ENCODE measurements at regions of chr6 and their contacts with region 1.

Region 1: DNA sequence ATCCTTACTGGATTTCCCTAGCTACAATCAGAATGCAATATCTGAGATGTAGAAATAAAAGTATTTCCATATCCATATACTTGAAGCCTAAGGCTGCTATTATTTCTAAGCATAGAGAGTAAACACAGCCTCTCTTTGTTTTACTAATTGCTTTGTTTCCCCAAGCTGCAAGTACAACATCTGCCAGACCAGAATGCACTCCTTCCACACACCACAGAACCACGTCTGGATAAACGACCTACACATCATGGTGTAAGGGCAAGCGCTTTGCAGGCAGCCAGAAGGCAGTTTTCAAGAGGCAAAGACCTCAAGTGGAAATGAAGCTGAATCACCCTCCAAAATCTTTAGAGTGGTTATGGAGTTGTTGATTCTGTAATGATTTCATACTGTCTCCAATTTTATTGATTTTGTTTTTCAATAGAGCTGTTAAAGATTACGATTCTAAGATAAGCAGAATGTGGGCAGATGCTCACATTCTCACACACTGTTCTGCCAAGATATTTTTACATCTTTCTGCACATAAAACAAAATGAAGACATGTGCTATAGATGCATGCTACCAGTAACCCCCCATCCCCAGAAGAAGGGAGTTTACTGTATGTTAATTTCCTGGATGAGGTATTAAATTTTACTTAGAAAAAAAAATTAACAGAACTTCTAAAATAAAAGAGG is 88.8 kb downstream of the THEMIS start:
- DNase-seq: no peak
- CTCF ChIP-seq: no peak

Region 2: DNA sequence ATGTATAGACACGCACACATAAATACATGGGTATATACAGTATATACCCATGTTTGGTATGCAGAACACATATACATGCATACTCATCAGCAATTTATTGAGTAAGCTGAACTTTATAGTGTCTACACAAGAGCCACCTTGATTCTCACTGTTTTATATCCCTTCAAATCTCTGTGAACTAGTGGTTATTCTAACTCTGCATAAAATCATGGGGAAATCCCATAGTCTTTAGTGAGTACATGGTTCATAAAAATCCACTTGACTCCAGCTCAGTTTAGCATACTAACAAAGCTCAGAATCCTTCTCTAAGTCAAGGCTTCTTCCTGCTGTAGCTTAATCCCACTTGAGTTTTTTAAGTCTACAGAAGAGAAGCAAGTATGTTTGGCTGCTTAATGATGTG is 15.3 kb before region 1 on chr6:
- CTCF ChIA-PET with region 1: interaction called, 12 read pairs
- POLR2A ChIA-PET with region 1: no interaction called
- DNase-seq: no peak
- CTCF ChIP-seq: no peak

Region 3: DNA sequence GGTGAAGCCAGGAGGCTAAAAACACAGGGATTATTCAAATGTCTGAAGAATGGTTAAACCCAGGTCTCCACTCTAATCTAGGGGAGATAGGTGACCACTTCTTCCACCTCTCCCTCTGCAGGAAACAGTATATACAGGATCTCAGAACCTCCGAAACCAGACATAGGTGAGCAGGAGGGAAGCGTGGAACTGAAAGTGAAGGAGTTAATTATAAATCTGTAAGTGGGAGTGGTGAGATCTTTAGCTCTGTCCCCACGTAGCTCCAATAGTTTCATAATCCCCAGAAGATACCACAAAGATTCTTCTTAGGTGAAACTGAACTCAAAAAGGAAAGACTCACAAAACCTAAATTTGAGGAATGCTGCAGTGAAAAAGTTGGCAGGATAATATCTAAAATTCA is 12.0 kb after region 1 on chr6:
- CTCF ChIA-PET with region 1: interaction called, 10 read pairs
- POLR2A ChIA-PET with region 1: no interaction called
- DNase-seq: no peak
- CTCF ChIP-seq: no peak

Measured in GM10248 (cell line).